Sigmoid colon (tissue), 7 donors: ENCODE measurements at regions of chr15 and their contacts with region 1.

Region 1: DNA sequence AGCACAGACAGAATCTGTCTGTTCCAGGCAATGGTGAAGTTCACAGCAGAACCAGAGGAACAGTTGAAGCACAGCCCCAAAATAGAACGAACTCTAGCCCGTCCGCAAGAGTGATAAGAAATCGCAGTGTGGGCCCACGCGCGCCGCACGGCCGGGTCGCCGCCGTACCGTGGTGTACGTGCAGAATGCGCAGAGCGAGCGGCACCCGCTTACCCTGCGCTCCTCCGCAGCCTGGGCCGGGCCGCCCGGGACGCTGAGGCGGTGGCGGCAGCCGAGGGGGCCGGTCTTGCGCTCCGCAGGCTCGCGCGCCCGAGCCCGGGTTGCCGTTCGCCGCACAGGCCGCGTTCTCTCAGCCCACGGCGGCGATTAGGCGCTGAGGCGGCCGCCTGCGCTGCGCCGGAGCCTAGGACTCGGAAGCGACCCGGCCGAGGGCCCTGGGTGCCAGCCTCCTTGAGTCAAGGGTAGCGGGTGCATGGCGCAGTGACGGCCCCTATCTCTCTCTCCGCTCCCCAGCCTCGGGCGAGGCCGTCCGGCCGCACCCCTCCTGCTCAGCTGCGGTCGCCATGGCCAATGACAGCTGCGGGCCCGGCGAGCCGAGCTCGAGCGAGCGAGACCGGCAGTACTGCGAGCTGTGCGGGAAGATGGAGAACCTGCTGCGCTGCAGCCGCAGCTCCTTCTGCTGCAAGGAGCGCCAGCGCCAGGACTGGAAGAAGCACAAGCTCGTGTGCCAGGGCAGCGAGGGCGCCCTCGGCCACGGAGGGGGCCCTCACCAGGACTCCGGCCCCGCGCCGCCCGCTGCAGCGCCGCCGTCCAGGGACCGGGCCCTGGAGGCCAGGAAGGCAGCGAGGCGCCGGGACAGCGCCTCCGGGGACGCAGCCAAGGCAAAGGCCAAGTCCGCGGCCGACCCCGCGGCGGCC is 20.5 kb downstream of the WDR73 start:
- DNase-seq: peak; percentile 83
- H3K4me3 ChIP-seq: peak overlapping the region; percentile 55 to 79 (median 67)
- H3K27ac ChIP-seq: peak overlapping the region; percentile 88 to 97 (median 92)
- H3K4me1 ChIP-seq: peaks cover 0 to 48% (median 38%) of the 10 kb centered on the region in 4 donors
- H3K27me3 ChIP-seq: no peaks in the 10 kb centered on the region
- CTCF ChIP-seq: no peak
- EP300 ChIP-seq: no peak
- POLR2A ChIP-seq: no peak

Region 2: GRCh38 chr15:84570164-84570735 is 63.3 kb before region 1 on chr15:
- intact Hi-C with region 1: loop called (anchors 2 kb)
- DNase-seq: peak; percentile 80
- H3K4me3 ChIP-seq: peak overlapping the region; percentile 61 to 81 (median 69)
- H3K27ac ChIP-seq: peak overlapping the region; percentile 86 to 95 (median 94)
- H3K4me1 ChIP-seq: peaks cover 0 to 16% (median 8%) of the 10 kb centered on the region in 4 donors
- H3K27me3 ChIP-seq: no peaks in the 10 kb centered on the region
- CTCF ChIP-seq: no peak
- EP300 ChIP-seq: no peak
- POLR2A ChIP-seq: no peak

Region 3: GRCh38 chr15:84600851-84601838 is 32.4 kb before region 1 on chr15 and contains the start of gene ZSCAN2:
- intact Hi-C with region 1: loop called (anchors 2 kb)
- DNase-seq: peak; percentile 97
- H3K4me3 ChIP-seq: peak within 1 kb of the TSS; percentile 77 to 98 (median 91)
- H3K27ac ChIP-seq: peak within 1 kb of the TSS; percentile 74 to 84 (median 78)
- H3K4me1 ChIP-seq: peaks cover 0 to 22% (median 10%) of the 10 kb centered on the region in 4 donors
- H3K27me3 ChIP-seq: no peaks in the 10 kb centered on the region
- CTCF ChIP-seq: no peak
- EP300 ChIP-seq: peak in 1 of 4 donors; percentile 12
- POLR2A ChIP-seq: no peak
- total RNA-seq, gene ZSCAN2: 4.2 to 17.0 (median 6.8) TPM